ENCODE measurements at regions of chr17 and their contacts with region 1.

Region 1: GRCh38 chr17:70405492-70406220 is 236.3 kb downstream of the KCNJ2 start:
- DNase-seq: peak; percentile 41
- ATAC-seq: peak; percentile 96
- H3K4me3 ChIP-seq: no peak overlapping the region
- H3K27ac ChIP-seq: no peak overlapping the region
- H3K4me1 ChIP-seq: no peaks in the 10 kb centered on the region
- H3K27me3 ChIP-seq: no peaks in the 10 kb centered on the region
- CTCF ChIP-seq: no peak
- EP300 ChIP-seq: peak in 1 of 2 experiments; percentile 36; a peak in 1 of 4 replicates
- POLR2A ChIP-seq: no peak
- RAD21 ChIP-seq: no peak

Region 2: GRCh38 chr17:70344386-70345060 is 61.1 kb before region 1 on chr17:
- CTCF ChIA-PET with region 1: no interaction called
- POLR2A ChIA-PET with region 1: no interaction called
- RAD21 ChIA-PET with region 1: interaction called, 7 read pairs
- SMC1A ChIA-PET with region 1: interaction called, 12 read pairs
- in situ Hi-C with region 1: no loop called
- intact Hi-C with region 1: no loop called
- DNase-seq: no peak
- ATAC-seq: peak; percentile 74
- H3K4me3 ChIP-seq: no peak overlapping the region
- H3K27ac ChIP-seq: no peak overlapping the region
- H3K4me1 ChIP-seq: no peaks in the 10 kb centered on the region
- H3K27me3 ChIP-seq: no peaks in the 10 kb centered on the region
- CTCF ChIP-seq: no peak
- EP300 ChIP-seq: no peak
- POLR2A ChIP-seq: no peak
- RAD21 ChIP-seq: no peak

Region 3: GRCh38 chr17:70353408-70354092 is 52.1 kb before region 1 on chr17:
- CTCF ChIA-PET with region 1: no interaction called
- POLR2A ChIA-PET with region 1: no interaction called
- RAD21 ChIA-PET with region 1: no interaction called
- SMC1A ChIA-PET with region 1: interaction called, 14 read pairs
- in situ Hi-C with region 1: no loop called
- intact Hi-C with region 1: no loop called
- DNase-seq: no peak
- ATAC-seq: peak; percentile 83
- H3K4me3 ChIP-seq: no peak overlapping the region
- H3K27ac ChIP-seq: no peak overlapping the region
- H3K4me1 ChIP-seq: no peaks in the 10 kb centered on the region
- H3K27me3 ChIP-seq: no peaks in the 10 kb centered on the region
- CTCF ChIP-seq: no peak
- EP300 ChIP-seq: no peak
- POLR2A ChIP-seq: no peak
- RAD21 ChIP-seq: no peak

Region 4: DNA sequence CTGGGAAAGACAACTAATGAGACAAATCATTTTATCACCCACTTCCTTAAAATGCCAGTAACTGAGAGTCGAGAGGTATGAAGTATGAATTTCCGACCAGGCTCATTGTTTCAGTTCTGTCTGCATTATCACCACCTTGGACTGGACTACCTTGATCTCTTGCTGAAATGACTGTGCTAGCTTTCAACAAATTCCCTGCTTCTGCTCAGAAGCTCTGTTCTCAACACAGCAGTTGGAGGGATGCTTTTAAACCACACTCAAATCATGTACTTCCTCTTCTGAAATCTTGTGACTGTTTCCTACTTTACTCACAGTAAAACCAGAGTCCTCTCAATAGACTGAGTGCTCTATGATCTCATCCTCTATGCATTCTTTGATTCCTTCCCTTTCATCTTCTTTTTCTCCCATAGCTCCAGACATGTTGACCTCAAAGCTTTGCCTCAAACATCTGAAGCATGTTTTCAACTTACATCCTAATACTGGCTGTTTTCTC is 40.5 kb before region 1 on chr17:
- CTCF ChIA-PET with region 1: interaction called, 3 read pairs
- POLR2A ChIA-PET with region 1: no interaction called
- RAD21 ChIA-PET with region 1: no interaction called
- SMC1A ChIA-PET with region 1: interaction called, 5 read pairs
- in situ Hi-C with region 1: no loop called
- intact Hi-C with region 1: loop called (anchors 5 kb)
- DNase-seq: peak; percentile 71
- ATAC-seq: peak; percentile 99
- H3K4me3 ChIP-seq: no peak overlapping the region
- H3K27ac ChIP-seq: no peak overlapping the region; the same call in 1 of the 2 replicates
- H3K4me1 ChIP-seq: no peaks in the 10 kb centered on the region
- H3K27me3 ChIP-seq: no peaks in the 10 kb centered on the region
- CTCF ChIP-seq: no peak
- EP300 ChIP-seq: peak in 1 of 2 experiments; percentile 95; a peak in 2 of 4 replicates
- POLR2A ChIP-seq: no peak
- RAD21 ChIP-seq: no peak; the same call in 1 of the 2 replicates